Heart right ventricle (tissue), 16 donors: ENCODE measurements at regions of chr17 and their contacts with region 1.

Region 1: DNA sequence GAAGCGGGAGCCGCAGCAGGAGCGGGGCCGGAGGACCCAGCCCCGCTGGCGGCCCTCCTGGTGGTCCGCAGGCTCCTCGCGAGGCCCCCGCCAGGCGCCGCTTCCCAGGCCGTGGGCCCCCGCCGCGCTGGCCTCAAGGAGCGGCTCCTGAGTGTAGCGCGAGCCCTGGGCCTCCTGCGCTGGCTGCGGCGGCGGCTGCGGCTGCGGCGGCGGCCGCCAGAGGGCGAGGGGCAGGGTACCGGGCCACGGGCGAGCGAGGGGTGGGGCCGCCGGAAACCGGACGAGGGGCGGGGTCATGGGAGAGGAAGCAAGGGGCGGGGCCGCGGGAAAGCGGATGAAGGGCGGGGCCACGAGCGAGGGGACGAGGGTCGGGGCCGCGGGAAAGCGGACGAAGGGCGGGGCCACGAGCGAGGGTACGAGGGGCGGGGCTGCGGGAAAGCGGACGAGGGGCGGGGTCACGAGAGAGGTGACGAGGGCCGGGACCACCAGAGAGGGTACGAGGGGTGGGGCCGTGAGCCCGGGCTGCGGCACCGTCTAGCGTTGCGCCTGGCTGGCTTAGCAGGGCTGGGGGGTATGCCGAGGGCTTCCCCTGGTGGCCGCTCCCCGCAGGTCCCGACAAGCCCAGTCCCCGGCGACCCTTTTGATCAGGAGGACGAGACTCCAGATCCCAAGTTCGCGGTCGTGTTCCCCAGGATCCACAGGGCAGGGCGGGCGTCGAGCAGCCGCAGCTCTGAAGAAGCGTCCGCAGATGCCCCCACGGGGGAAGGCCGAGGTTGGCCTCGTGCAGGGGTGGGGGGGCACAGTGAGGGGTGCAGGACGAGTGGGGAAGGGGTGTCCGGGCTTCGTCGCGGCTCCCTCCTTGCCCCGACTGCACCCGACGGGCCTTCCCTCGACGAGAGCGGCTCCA is 1.7 kb downstream of the MYO15B start:
- DNase-seq: peak; percentile 97 to 99
- ATAC-seq: peak; percentile 88 to 94 (median 92)
- H3K4me3 ChIP-seq: peak overlapping the region; percentile 56 to 89 (median 74)
- H3K27ac ChIP-seq: peak overlapping the region; percentile 92 to 99 (median 96)
- H3K4me1 ChIP-seq: peaks cover 9 to 31% (median 21%) of the 10 kb centered on the region in 9 donors
- H3K27me3 ChIP-seq: peaks cover 0 to 8% (median 0%) of the 10 kb centered on the region in 7 donors
- CTCF ChIP-seq: peak; percentile 50 to 83 (median 68)

Region 2: GRCh38 chr17:75524953-75525719 is 64.1 kb before region 1 on chr17 and contains the start of gene LLGL2:
- intact Hi-C with region 1: loop called in 2 of 10 experiments (anchors 2 to 5 kb)
- DNase-seq: peak in 1 of 2 donors; percentile 75
- ATAC-seq: peak; percentile 81 to 92 (median 86)
- H3K4me3 ChIP-seq: peak within 1 kb of the TSS; percentile 7 to 80 (median 68)
- H3K27ac ChIP-seq: peak within 1 kb of the TSS in 9 of 10 donors; percentile 26 to 78 (median 64)
- H3K4me1 ChIP-seq: peaks cover 0 to 23% (median 16%) of the 10 kb centered on the region in 9 donors
- H3K27me3 ChIP-seq: peaks cover 0 to 18% (median 0%) of the 10 kb centered on the region in 7 donors
- CTCF ChIP-seq: peak; percentile 15 to 74 (median 49)
- total RNA-seq, gene LLGL2: 1.1 to 5.0 (median 2.6) TPM

Region 3: GRCh38 chr17:75535119-75535537 is 54.1 kb before region 1 on chr17:
- intact Hi-C with region 1: loop called in 1 of 10 experiments (anchors 5 kb)
- DNase-seq: no peak
- ATAC-seq: peak in 3 of 8 donors; percentile 7 to 32 (median 16)
- H3K4me3 ChIP-seq: no peak overlapping the region
- H3K27ac ChIP-seq: peak overlapping the region in 1 of 10 donors; percentile 78
- H3K4me1 ChIP-seq: no peaks in the 10 kb centered on the region
- H3K27me3 ChIP-seq: no peaks in the 10 kb centered on the region
- CTCF ChIP-seq: no peak